ENCODE measurements at regions of chr12 and their contacts with region 1.

Region 1: GRCh38 chr12:39619660-39620433 is at the start of gene ABCD2:
- DNase-seq: peak; percentile 48 to 96 (median 76)

Region 2: GRCh38 chr12:39319187-39319586 is 300.7 kb before region 1 on chr12:
- intact Hi-C with region 1: loop called (anchors 5 kb)
- DNase-seq: no peak

Region 3: DNA sequence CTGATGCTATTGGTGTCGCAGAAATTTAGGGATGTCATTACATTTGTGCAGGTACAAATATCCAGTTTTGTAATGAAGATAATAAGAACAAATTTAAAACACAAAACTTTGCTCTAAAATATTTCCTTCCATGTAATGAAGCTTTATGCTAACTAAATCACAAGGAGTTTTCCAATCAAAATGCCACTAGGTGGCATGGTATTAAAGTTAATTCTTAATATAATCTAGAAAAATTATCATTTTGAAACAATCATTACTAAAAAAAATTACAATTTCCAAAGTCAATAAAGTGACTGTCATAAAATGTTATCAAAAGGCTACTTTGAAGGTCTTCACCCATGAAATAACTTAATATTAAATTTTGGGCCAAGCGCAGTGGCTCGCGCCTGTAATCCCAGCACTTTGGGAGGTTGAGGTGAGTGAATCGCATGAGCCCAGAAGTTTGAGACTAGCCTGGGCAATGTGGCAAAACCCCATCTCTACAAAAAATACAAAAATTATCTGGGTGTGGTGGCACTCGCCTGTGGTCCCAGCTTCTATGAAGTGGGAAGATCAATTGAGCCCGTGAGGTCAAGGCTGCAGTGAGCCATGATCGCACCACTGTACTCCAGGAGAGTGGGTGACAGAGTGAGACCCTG is 254.4 kb before region 1 on chr12:
- intact Hi-C with region 1: loop called (anchors 10 kb)
- DNase-seq: peak in 2 of 10 donors; percentile 52 to 63